CD4-positive, alpha-beta T cell (primary cell): ENCODE measurements at regions of chr1 and their contacts with region 1.

Region 1: DNA sequence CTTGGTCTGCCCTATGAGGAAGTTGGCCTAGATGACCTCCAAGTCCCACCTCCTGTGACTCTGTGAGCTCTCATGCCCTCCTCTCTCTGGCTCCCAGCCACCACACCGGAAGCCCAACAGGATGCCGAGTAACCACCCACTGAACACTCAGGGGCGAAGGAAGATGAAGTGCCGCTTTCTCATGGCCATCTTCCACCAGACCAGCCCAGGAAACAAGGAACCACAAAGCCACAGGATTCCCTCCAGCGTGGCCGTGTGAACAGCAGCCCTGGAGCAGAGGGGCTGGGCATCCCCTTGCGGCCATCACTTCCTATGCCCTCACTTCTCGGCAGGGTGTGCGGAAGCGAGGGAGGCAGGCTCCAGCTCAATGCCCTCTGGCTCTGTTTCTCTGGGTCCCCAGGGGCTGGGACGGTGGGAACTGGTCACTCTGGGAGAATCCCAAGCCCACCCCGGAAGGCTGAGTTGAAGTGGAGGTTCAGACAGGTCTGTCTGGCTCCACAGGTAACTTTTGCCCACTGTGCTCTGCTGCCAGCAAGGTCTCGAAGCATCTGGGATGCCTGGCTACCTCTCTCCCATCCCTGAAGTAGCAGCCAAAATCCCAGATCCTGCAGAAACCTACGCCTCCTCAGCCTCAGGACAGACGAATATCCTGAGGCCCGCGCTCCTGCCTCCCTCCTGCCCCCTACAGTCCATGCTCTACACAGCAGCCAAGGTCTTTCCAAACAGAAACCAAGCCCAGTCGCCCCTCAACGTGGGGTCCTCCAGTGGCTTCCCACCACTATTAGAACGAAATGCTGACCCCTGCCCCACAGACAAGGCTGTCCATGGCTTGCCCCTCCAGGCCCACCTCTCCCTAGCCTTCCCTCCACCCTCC is 44.2 kb upstream of the ECE1 start:
- DNase-seq: peak; percentile 60 to 96 (median 74)
- ATAC-seq: peak; percentile 80
- H3K4me3 ChIP-seq: peak overlapping the region; percentile 50
- H3K4me3 Mint-ChIP-seq: peak overlapping the region; percentile 92
- H3K27ac ChIP-seq: peak overlapping the region; percentile 81 to 89
- H3K27ac Mint-ChIP-seq: peak overlapping the region; percentile 98
- H3K4me1 ChIP-seq: peaks cover 97% of the 10 kb centered on the region
- H3K4me1 Mint-ChIP-seq: peaks cover 89% of the 10 kb centered on the region
- H3K27me3 ChIP-seq: no peaks in the 10 kb centered on the region
- H3K27me3 Mint-ChIP-seq: no peaks in the 10 kb centered on the region
- CTCF ChIP-seq: peak; percentile 66

Region 2: GRCh38 chr1:21255278-21255942 is 79.0 kb before region 1 on chr1:
- CTCF ChIA-PET with region 1: interaction called, 12 read pairs
- POLR2A ChIA-PET with region 1: interaction called, 8 read pairs
- intact Hi-C with region 1: loop called (anchors 1 kb)
- DNase-seq: peak; percentile 78 to 90 (median 83)
- ATAC-seq: peak; percentile 87
- H3K4me3 ChIP-seq: no peak overlapping the region
- H3K4me3 Mint-ChIP-seq: no peak overlapping the region
- H3K27ac ChIP-seq: no peak overlapping the region
- H3K27ac Mint-ChIP-seq: peak overlapping the region; percentile 19
- H3K4me1 ChIP-seq: peaks cover 28% of the 10 kb centered on the region
- H3K4me1 Mint-ChIP-seq: peaks cover 25% of the 10 kb centered on the region
- H3K27me3 ChIP-seq: no peaks in the 10 kb centered on the region
- H3K27me3 Mint-ChIP-seq: no peaks in the 10 kb centered on the region
- CTCF ChIP-seq: peak; percentile 78